ENCODE measurements at regions of chr5 and their contacts with region 1.

Region 1: DNA sequence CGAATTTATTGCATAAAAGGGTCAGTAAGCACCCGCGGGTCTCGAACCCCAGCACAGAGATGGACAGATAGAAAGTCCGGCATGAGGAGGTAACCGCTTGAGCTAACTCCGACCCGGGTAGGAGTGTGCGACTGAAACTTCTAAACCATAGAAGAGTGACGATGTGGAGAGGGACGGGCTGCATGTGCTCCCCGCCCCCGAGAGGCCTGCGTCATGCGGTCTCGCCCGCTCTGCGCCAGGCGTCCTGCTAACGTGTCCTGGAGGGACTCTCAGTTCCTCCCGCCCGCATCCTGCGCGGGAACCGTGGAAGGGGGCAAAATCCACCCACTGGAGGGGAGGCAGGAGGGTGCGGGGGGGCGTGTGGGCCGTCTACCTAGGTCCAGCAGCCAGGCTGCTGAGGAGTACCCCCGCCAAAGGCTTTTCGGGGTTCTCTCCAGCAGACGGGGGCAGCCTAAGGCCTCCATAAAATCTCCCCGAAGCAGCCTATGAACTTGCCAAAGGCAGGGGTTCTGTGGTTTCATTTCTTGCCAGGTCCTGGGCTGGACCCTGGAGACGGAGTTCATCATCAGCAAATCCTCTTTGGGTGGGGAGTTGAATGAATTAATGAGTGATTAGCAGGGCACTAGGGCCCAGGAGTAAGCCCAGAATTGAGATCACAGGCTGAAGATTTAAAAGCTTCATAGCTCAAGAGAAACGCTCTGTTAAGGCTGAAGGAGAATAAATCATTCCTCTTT is 51.9 kb downstream of the TGFBI start:
- DNase-seq: peak; percentile 87 to 95
- H3K4me3 ChIP-seq: peak overlapping the region; percentile 48 to 52
- H3K27ac ChIP-seq: peak overlapping the region; percentile 70 to 80
- H3K4me1 ChIP-seq: peaks cover 0 to 19% (median 8%) of the 10 kb centered on the region in 4 donors
- H3K27me3 ChIP-seq: no peaks in the 10 kb centered on the region
- CTCF ChIP-seq: no peak

Region 2: DNA sequence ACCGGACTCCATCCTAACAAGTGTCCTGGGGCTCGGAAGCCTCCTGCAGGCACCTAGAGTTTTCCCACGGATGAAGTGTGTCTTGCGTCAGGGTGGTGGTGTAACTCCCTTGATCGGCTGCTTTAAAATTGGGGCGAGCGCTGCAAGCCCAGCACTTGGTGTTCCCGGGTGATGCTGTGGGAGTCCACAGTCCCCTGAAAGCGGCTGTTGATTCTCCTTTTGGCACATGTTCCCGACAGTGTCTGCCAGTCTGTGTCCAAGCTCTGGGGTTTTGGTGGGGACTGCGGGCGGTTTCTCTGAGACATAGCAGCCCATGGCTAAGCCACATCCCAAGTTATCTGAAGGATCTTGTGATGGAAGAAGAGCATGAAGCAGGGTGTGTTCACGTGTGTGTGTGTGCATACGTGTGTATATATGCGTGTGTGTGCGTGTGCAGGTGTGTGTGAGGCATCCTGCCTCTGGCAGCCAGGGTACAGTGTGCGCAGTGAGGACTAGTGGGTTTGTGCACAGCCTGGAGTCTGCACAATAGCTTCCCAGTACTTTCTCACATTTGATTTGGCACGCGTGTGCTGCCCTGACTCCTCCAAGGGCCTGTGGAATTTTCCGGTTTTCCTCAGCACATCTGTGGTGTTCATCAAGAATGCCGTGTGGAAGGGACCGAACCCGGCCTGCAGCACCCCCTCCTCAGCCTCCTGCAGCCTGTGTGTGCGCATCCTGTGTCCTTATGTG is 229.3 kb before region 1 on chr5:
- intact Hi-C with region 1: no loop called
- DNase-seq: no peak
- H3K4me3 ChIP-seq: no peak overlapping the region
- H3K27ac ChIP-seq: no peak overlapping the region
- H3K4me1 ChIP-seq: no peaks in the 10 kb centered on the region
- H3K27me3 ChIP-seq: no peaks in the 10 kb centered on the region
- CTCF ChIP-seq: no peak

Region 3: DNA sequence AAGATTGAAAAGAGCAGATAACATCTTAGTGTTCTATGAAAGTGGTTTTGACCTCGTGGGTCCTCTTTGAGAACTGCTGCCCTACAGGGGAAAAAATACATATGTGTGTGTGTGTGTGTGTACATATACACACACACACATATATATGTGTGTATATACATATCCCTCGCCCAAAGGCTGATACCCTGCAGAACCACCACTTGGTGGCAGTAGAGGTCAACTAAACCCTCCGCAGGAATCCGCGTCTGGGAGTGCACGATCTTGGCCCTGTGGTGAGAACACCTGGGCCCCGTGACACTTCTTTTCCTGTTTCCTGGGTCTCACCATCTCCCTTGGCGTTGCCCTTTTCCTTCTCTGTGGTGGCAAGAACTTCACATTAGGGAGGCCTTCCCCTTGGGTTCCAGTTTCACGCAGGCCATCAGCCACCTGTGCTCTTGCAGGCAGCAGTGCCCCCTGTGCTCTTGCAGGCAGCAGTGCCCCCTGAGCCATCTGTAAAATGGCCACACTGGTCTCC is 193.2 kb before region 1 on chr5:
- intact Hi-C with region 1: loop called (anchors 5 kb)
- DNase-seq: no peak
- H3K4me3 ChIP-seq: no peak overlapping the region
- H3K27ac ChIP-seq: no peak overlapping the region
- H3K4me1 ChIP-seq: peaks cover 0 to 3% (median 0%) of the 10 kb centered on the region in 4 donors
- H3K27me3 ChIP-seq: peaks cover 0 to 22% of the 10 kb centered on the region in 2 donors
- CTCF ChIP-seq: peak; percentile 77 to 80

Region 4: DNA sequence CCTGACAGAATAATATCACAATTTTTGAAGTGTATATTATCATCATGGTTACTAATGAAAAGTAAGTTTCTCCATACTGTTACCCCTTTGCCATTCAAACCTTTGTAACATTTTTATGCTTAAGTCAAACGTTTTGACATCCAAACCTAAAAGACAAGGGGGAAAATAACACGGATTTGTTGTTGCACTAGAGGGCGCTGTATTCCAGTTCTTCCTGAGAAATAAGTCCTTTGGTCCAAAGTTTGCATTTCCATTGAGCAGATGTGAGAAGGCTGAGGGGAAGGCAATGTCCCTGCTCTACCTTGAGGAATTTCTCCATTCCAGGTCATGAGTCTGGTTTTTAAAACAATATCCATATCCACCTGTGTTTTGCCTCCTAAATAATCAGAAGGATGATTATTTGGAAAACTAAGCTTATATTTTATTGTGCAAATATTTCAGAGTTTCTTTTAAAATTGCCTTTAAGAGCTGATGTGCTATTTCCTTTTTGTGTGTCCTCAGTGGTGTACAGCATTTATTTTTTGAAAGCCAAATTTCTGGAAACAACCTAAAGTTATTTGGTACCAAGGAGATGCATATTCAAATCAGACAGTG is 135.6 kb before region 1 on chr5:
- intact Hi-C with region 1: loop called (anchors 5 kb)
- DNase-seq: peak in 1 of 2 donors; percentile 65
- H3K4me3 ChIP-seq: no peak overlapping the region
- H3K27ac ChIP-seq: no peak overlapping the region
- H3K4me1 ChIP-seq: no peaks in the 10 kb centered on the region
- H3K27me3 ChIP-seq: no peaks in the 10 kb centered on the region
- CTCF ChIP-seq: peak; percentile 73 to 85

Region 5: GRCh38 chr5:136132557-136133221 is 52.0 kb after region 1 on chr5 and contains the start of gene SMAD5:
- intact Hi-C with region 1: loop called (anchors 5 kb)
- DNase-seq: peak; percentile 94 to 98
- H3K4me3 ChIP-seq: peak within 1 kb of the TSS; percentile 64 to 85
- H3K27ac ChIP-seq: peak within 1 kb of the TSS; percentile 90 to 95
- H3K4me1 ChIP-seq: peaks cover 0 to 66% (median 30%) of the 10 kb centered on the region in 4 donors
- H3K27me3 ChIP-seq: no peaks in the 10 kb centered on the region
- CTCF ChIP-seq: no peak